Ovary (tissue), 10 donors: ENCODE measurements at regions of chr16 and their contacts with region 1.

Region 1: GRCh38 chr16:18801197-18801972 is at the start of gene ARL6IP1:
- DNase-seq: peak; percentile 98 to 99 (median 99)
- H3K4me3 ChIP-seq: peak within 1 kb of the TSS; percentile 95
- H3K27ac ChIP-seq: peak within 1 kb of the TSS in 1 of 2 donors; percentile 85
- H3K4me1 ChIP-seq: peaks cover 8% of the 10 kb centered on the region
- H3K27me3 ChIP-seq: no peaks in the 10 kb centered on the region
- CTCF ChIP-seq: peak; percentile 95 to 98 (median 97)
- EP300 ChIP-seq: no peak
- POLR2A ChIP-seq: peak; percentile 97
- total RNA-seq, gene ARL6IP1: 82.7 to 171 (median 105) TPM

Region 2: GRCh38 chr16:18932243-18932981 is 131.0 kb after region 1 on chr16:
- intact Hi-C with region 1: loop called in 1 of 4 experiments (anchors 10 kb)
- DNase-seq: no peak
- H3K4me3 ChIP-seq: no peak overlapping the region
- H3K27ac ChIP-seq: no peak overlapping the region
- H3K4me1 ChIP-seq: no peaks in the 10 kb centered on the region
- H3K27me3 ChIP-seq: no peaks in the 10 kb centered on the region
- CTCF ChIP-seq: no peak
- EP300 ChIP-seq: no peak
- POLR2A ChIP-seq: no peak

Region 3: GRCh38 chr16:18969050-18969854 is 167.9 kb after region 1 on chr16:
- intact Hi-C with region 1: loop called in 1 of 4 experiments (anchors 5 kb)
- DNase-seq: peak; percentile 67 to 88 (median 83)
- H3K4me3 ChIP-seq: no peak overlapping the region
- H3K27ac ChIP-seq: no peak overlapping the region
- H3K4me1 ChIP-seq: no peaks in the 10 kb centered on the region
- H3K27me3 ChIP-seq: no peaks in the 10 kb centered on the region
- CTCF ChIP-seq: peak; percentile 64 to 86 (median 67)
- EP300 ChIP-seq: no peak
- POLR2A ChIP-seq: no peak

Region 4: GRCh38 chr16:19113453-19114351 is 312.3 kb after region 1 on chr16 and contains the start of gene ITPRIPL2:
- intact Hi-C with region 1: loop called in 1 of 4 experiments (anchors 10 kb)
- DNase-seq: peak; percentile 77 to 85 (median 83)
- H3K4me3 ChIP-seq: peak within 1 kb of the TSS; percentile 65
- H3K27ac ChIP-seq: peak within 1 kb of the TSS; percentile 92 to 95
- H3K4me1 ChIP-seq: peaks cover 15% of the 10 kb centered on the region
- H3K27me3 ChIP-seq: no peaks in the 10 kb centered on the region
- CTCF ChIP-seq: peak in 1 of 3 donors; percentile 24
- EP300 ChIP-seq: no peak
- POLR2A ChIP-seq: peak; percentile 57
- total RNA-seq, gene ITPRIPL2: 28.7 to 58.5 (median 46.8) TPM

Region 5: DNA sequence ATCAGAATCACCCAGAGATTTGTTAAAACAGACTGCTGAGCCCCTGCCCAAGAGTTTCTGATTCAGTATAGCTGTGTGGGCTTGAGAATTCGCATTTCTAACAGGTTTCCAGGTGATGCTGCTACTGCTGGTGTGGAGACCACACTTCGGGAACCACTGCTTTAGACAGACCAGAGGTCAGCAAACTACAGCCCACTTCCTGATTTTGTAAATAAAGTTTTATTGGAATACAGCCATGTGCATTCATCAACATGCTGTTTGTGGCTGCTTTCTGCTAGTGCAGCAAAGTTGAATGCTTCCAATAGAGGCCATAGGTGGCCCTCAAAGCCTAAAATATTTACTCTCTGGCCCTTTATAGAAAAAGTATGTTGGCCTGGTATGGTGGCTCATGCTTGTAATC is 451.5 kb after region 1 on chr16:
- intact Hi-C with region 1: no loop called
- DNase-seq: no peak
- H3K4me3 ChIP-seq: no peak overlapping the region
- H3K27ac ChIP-seq: no peak overlapping the region
- H3K4me1 ChIP-seq: no peaks in the 10 kb centered on the region
- H3K27me3 ChIP-seq: no peaks in the 10 kb centered on the region
- CTCF ChIP-seq: no peak
- EP300 ChIP-seq: no peak
- POLR2A ChIP-seq: no peak